OCI-LY7 (cell line): ENCODE measurements at regions of chr14 and their contacts with region 1.

Region 1: DNA sequence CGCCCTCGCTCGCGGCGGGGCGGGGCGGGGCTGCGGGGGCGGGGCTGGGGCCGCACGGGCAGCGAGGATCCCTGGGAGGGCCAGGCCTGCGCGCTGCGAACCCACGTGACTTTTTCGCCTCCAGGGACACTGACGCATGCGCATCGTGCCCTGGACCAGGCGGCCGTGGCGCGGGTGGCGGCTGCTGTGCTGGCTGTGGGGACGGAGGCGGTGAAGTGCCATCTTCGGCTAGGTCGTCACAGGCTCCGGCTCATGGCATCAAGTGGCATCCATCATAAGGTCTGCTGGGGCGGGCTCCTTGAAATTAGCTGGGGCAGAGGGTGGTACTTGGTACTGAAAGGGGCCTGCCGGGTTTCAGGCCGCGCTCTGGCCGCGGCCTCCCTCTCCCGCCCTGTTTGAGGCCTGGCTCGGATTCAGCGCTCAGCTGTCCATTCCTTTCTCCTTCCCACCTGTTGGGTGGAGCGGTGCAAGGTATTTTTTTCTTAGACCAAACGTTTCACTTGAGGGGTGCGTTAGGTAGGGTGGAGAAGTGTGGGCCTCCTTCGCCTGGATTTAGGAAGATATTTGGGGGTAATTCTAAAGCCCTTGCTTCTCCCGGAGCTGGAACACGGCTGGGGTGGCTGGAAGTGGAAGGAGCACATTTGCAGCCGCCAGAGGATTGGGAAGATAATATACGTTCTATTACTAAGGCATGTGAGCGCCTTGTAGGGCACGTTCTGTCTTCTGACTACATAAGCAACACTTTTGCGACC is at the start of gene PRPF39:
- DNase-seq: peak; percentile 96
- H3K4me3 ChIP-seq: peak within 1 kb of the TSS; percentile 87
- H3K27ac ChIP-seq: peak within 1 kb of the TSS; percentile 58
- H3K4me1 ChIP-seq: peaks cover 37% of the 10 kb centered on the region
- CTCF ChIP-seq: no peak
- total RNA-seq, gene PRPF39: 39.5 and 43.5 TPM in 2 replicates

Region 2: GRCh38 chr14:44961604-44962333 is 122.4 kb before region 1 on chr14 and contains the starts of genes KLHL28 and TOGARAM1:
- CTCF ChIA-PET with region 1: interaction called, 3 read pairs
- POLR2A ChIA-PET with region 1: interaction called, 6 read pairs
- intact Hi-C with region 1: loop called (anchors 2 kb)
- DNase-seq: peak; percentile 99
- H3K4me3 ChIP-seq: peak within 1 kb of the TSS; percentile 86
- H3K27ac ChIP-seq: peak within 1 kb of the TSS; percentile 75
- H3K4me1 ChIP-seq: peaks cover 22% of the 10 kb centered on the region
- CTCF ChIP-seq: no peak
- total RNA-seq, gene KLHL28: 3.7 and 10.6 TPM in 2 replicates
- total RNA-seq, gene TOGARAM1: 11.4 and 12.4 TPM in 2 replicates

Region 3: GRCh38 chr14:45144658-45145057 is 60.5 kb after region 1 on chr14:
- CTCF ChIA-PET with region 1: no interaction called
- POLR2A ChIA-PET with region 1: no interaction called
- intact Hi-C with region 1: no loop called
- DNase-seq: no peak
- H3K4me3 ChIP-seq: no peak overlapping the region
- H3K27ac ChIP-seq: no peak overlapping the region
- H3K4me1 ChIP-seq: peaks cover 16% of the 10 kb centered on the region
- CTCF ChIP-seq: no peak

Region 4: GRCh38 chr14:45253068-45253753 is 169.1 kb after region 1 on chr14 and contains the start of gene MIS18BP1:
- CTCF ChIA-PET with region 1: no interaction called
- POLR2A ChIA-PET with region 1: no interaction called
- intact Hi-C with region 1: loop called (anchors 5 kb)
- DNase-seq: peak; percentile 98
- H3K4me3 ChIP-seq: peak within 1 kb of the TSS; percentile 78
- H3K27ac ChIP-seq: peak within 1 kb of the TSS; percentile 88
- H3K4me1 ChIP-seq: peaks cover 26% of the 10 kb centered on the region
- CTCF ChIP-seq: peak; percentile 84
- total RNA-seq, gene MIS18BP1: 99.2 and 116 TPM in 2 replicates